ENCODE measurements at regions of chr3 and their contacts with region 1.

Region 1: GRCh38 chr3:39065197-39065596 is 13.4 kb downstream of the WDR48 start:
- DNase-seq: peak; percentile 73
- ATAC-seq: peak; percentile 99
- H3K4me3 ChIP-seq: no peak overlapping the region
- H3K4me3 Mint-ChIP-seq: no peak overlapping the region
- H3K27ac ChIP-seq: peak overlapping the region in 1 of 2 donors; percentile 79
- H3K27ac Mint-ChIP-seq: peak overlapping the region; percentile 37
- H3K4me1 ChIP-seq: peaks cover 7 to 11% of the 10 kb centered on the region in 2 donors
- H3K4me1 Mint-ChIP-seq: peaks cover 22% of the 10 kb centered on the region
- H3K27me3 ChIP-seq: no peaks in the 10 kb centered on the region
- H3K27me3 Mint-ChIP-seq: no peaks in the 10 kb centered on the region
- CTCF ChIP-seq: peak; percentile 69

Region 2: DNA sequence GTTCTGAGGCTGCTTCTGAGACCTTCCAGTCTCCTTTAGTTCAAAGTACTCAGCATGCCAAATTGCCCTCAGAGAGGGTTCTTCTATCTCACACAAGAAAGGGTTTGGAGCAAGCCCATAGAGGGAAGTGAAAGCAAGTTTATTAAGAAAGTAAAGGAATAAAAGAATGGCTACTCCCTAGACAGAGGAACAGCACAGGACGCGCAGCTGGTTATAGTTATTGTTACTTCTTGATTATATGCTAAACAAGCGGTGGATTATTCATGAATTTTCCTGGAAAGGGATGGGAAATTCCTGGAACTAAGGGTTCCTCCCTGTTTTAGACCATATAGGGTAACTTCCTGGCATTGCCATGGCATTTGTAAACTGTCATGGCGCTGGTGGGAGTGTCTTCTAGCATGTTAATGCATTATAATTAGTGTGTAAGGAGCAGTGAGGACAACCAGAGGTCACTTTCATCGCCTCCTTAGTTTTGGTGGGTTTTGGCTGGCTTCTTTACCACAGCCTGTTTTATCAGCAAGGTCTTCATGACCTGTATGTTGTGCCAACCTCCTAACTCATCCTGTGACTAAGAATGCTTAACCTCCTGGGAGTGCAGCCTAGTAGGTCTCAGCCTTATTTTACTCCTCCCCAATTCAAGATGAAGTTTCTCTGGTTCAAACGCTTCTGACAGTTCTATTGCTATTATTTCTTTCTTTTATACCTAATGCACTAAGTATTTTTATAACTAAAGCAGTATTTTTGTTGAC is 39.8 kb before region 1 on chr3:
- CTCF ChIA-PET with region 1: interaction called, 12 read pairs
- POLR2A ChIA-PET with region 1: no interaction called
- intact Hi-C with region 1: no loop called
- DNase-seq: no peak
- ATAC-seq: no peak
- H3K4me3 ChIP-seq: no peak overlapping the region
- H3K4me3 Mint-ChIP-seq: no peak overlapping the region
- H3K27ac ChIP-seq: no peak overlapping the region
- H3K27ac Mint-ChIP-seq: no peak overlapping the region
- H3K4me1 ChIP-seq: no peaks in the 10 kb centered on the region
- H3K4me1 Mint-ChIP-seq: no peaks in the 10 kb centered on the region
- H3K27me3 ChIP-seq: no peaks in the 10 kb centered on the region
- H3K27me3 Mint-ChIP-seq: peaks cover 12% of the 10 kb centered on the region
- CTCF ChIP-seq: no peak